BJ (cell line): ENCODE measurements at regions of chr19 and their contacts with region 1.

Region 1: DNA sequence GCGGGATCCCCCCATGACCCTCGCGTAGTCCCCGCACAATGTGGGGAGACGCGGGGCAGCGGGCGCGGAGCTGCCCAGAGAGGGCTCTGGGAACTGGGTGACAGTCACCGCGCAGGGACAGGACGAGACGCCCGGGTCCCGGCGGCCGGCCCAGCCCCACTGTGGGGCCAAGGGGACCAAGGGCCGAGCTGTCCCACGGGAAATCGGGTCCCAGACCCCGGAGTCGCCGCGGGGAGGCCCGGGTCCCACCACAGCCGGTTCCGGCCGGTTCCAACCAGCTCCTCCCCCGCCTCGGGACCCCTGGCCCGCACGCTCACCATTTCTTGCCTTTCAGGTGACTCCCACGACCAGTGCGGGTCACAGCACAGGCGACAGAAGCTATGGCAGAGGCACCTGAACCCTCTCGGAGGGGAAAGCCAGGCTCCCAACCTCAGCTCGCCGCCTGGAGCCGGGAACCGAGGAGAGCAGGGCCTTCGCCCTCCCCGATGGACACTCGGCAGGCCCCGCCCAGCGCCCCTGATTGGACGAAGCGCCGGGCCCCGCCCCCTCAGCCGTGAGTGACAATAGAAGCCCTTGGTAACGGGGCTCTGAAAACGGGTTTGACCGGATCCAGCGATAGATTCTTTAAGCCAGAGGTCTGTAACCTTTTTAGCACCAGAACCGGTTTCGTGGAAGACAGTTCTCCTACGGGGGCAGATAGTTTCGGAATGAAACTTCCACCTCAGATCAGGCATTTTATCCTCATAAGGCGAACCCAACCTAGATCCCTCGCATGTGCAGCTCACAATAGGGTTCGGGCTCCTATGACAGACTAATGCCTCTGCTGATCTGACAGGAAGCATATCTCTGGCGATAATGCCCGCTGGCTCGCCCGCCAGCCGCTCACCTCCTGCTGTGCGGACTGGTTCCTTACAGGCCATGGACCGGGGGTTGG is at the start of gene ZNF433:
- DNase-seq: peak; percentile 31
- H3K4me3 ChIP-seq: peak within 1 kb of the TSS; percentile 83
- H3K27me3 ChIP-seq: no peaks in the 10 kb centered on the region
- CTCF ChIP-seq: no peak; the same call in 1 of the 2 replicates
- polyA plus RNA-seq, gene ZNF433: 1.8 and 2.3 TPM in 2 replicates

Region 2: GRCh38 chr19:12166626-12167025 is 131.1 kb after region 1 on chr19:
- CTCF ChIA-PET with region 1: no interaction called
- POLR2A ChIA-PET with region 1: interaction called, 19 read pairs
- DNase-seq: no peak
- H3K4me3 ChIP-seq: no peak overlapping the region
- H3K27me3 ChIP-seq: no peaks in the 10 kb centered on the region
- CTCF ChIP-seq: no peak